B cell (primary cell): ENCODE measurements at regions of chr2 and their contacts with region 1.

Region 1: GRCh38 chr2:28392297-28393113 is at the start of gene FOSL2:
- DNase-seq: peak; percentile 84
- ATAC-seq: peak; percentile 78
- H3K4me3 ChIP-seq: peak within 1 kb of the TSS; percentile 42 to 90 (median 61)
- H3K4me3 Mint-ChIP-seq: peak within 1 kb of the TSS; percentile 89
- H3K27ac ChIP-seq: peak within 1 kb of the TSS; percentile 6 to 52
- H3K27ac Mint-ChIP-seq: peak within 1 kb of the TSS; percentile 87
- H3K4me1 ChIP-seq: peaks cover 18% of the 10 kb centered on the region in 2 donors
- H3K4me1 Mint-ChIP-seq: peaks cover 25% of the 10 kb centered on the region
- H3K27me3 ChIP-seq: peaks cover 0 to 31% (median 4%) of the 10 kb centered on the region in 4 experiments
- H3K27me3 Mint-ChIP-seq: peaks cover 17% of the 10 kb centered on the region
- CTCF ChIP-seq: no peak
- total RNA-seq, gene FOSL2: 37.7 and 42.2 TPM in 2 replicates

Region 2: GRCh38 chr2:27217217-27218121 is 1175.0 kb before region 1 on chr2 and contains the start of gene CAD:
- CTCF ChIA-PET with region 1: no interaction called
- POLR2A ChIA-PET with region 1: no interaction called
- intact Hi-C with region 1: loop called (anchors 5 kb)
- DNase-seq: peak; percentile 89
- ATAC-seq: peak; percentile 86
- H3K4me3 ChIP-seq: peak within 1 kb of the TSS; percentile 11 to 85 (median 79)
- H3K4me3 Mint-ChIP-seq: peak within 1 kb of the TSS; percentile 98
- H3K27ac ChIP-seq: peak within 1 kb of the TSS; percentile 70 to 74
- H3K27ac Mint-ChIP-seq: peak within 1 kb of the TSS; percentile 87
- H3K4me1 ChIP-seq: peaks cover 28 to 33% of the 10 kb centered on the region in 2 donors
- H3K4me1 Mint-ChIP-seq: peaks cover 44% of the 10 kb centered on the region
- H3K27me3 ChIP-seq: no peaks in the 10 kb centered on the region
- H3K27me3 Mint-ChIP-seq: no peaks in the 10 kb centered on the region
- CTCF ChIP-seq: no peak
- total RNA-seq, gene CAD: 35.6 and 36.0 TPM in 2 replicates

Region 3: DNA sequence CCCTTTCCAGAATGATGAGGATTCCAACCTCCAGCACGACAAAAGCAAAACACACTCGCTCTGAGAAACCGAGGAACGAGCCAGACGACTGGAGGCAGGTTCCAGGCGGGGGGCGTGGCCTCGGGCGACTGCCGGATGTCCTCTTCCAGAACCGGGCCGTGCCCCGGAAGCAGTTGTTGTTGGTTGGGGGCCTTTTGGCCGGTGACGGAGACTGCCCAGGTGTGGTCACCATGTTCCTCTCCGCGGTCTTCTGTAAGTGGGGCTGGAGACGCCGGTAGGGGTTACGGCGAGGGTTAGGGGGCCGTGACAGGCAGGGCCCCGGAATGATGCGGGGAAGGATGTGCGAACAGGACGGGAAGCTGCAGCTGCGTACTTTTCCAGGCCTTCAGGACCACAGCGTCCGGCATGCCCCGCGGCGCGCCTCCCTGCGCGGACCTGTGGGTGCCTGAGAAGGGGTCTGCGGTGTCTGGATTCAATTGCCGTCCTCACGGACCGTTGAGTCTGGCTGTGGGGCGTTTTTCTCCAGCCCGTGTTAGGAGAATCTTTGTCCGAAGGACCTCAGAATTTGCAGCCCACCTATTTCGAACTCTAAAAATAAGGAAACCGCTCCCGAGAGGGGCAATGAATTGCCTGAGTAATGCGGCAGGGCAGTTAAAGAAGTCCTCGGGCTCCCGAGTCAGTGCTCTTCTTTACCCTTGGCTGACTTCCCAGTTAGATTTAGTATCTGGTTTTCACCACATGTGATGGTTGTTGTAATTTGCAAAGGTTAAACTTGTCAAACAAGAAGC is 620.8 kb before region 1 on chr2 and contains the start of gene MRPL33:
- CTCF ChIA-PET with region 1: no interaction called
- POLR2A ChIA-PET with region 1: interaction called, 3 read pairs
- intact Hi-C with region 1: loop called (anchors 5 kb)
- DNase-seq: peak; percentile 93
- ATAC-seq: peak; percentile 94
- H3K4me3 ChIP-seq: peak within 1 kb of the TSS; percentile 62 to 91 (median 85)
- H3K4me3 Mint-ChIP-seq: peak within 1 kb of the TSS; percentile 100
- H3K27ac ChIP-seq: peak within 1 kb of the TSS; percentile 75 to 93
- H3K27ac Mint-ChIP-seq: peak within 1 kb of the TSS; percentile 99
- H3K4me1 ChIP-seq: peaks cover 11 to 22% of the 10 kb centered on the region in 2 donors
- H3K4me1 Mint-ChIP-seq: peaks cover 34% of the 10 kb centered on the region
- H3K27me3 ChIP-seq: peaks cover 0 to 16% (median 2%) of the 10 kb centered on the region in 4 experiments
- H3K27me3 Mint-ChIP-seq: peaks cover 13% of the 10 kb centered on the region
- CTCF ChIP-seq: no peak
- total RNA-seq, gene MRPL33: 26.5 and 26.9 TPM in 2 replicates

Region 4: GRCh38 chr2:28359222-28360065 is 33.1 kb before region 1 on chr2:
- CTCF ChIA-PET with region 1: no interaction called
- POLR2A ChIA-PET with region 1: interaction called, 8 read pairs
- intact Hi-C with region 1: loop called (anchors 1 kb)
- DNase-seq: peak; percentile 82
- ATAC-seq: peak; percentile 76
- H3K4me3 ChIP-seq: peak overlapping the region in 4 of 5 experiments; percentile 5 to 38 (median 22)
- H3K4me3 Mint-ChIP-seq: peak overlapping the region; percentile 75
- H3K27ac ChIP-seq: no peak overlapping the region
- H3K27ac Mint-ChIP-seq: peak overlapping the region; percentile 88
- H3K4me1 ChIP-seq: peaks cover 11 to 22% of the 10 kb centered on the region in 2 donors
- H3K4me1 Mint-ChIP-seq: peaks cover 24% of the 10 kb centered on the region
- H3K27me3 ChIP-seq: peaks cover 0 to 7% (median 0%) of the 10 kb centered on the region in 4 experiments
- H3K27me3 Mint-ChIP-seq: peaks cover 3% of the 10 kb centered on the region
- CTCF ChIP-seq: no peak

Region 5: GRCh38 chr2:28894470-28895177 is 502.1 kb after region 1 on chr2 and contains the start of gene WDR43:
- CTCF ChIA-PET with region 1: no interaction called
- POLR2A ChIA-PET with region 1: no interaction called
- intact Hi-C with region 1: loop called (anchors 10 kb)
- DNase-seq: peak; percentile 98
- ATAC-seq: peak; percentile 97
- H3K4me3 ChIP-seq: peak within 1 kb of the TSS; percentile 64 to 89 (median 84)
- H3K4me3 Mint-ChIP-seq: peak within 1 kb of the TSS; percentile 92
- H3K27ac ChIP-seq: peak within 1 kb of the TSS; percentile 71 to 81
- H3K27ac Mint-ChIP-seq: peak within 1 kb of the TSS; percentile 94
- H3K4me1 ChIP-seq: peaks cover 26 to 30% of the 10 kb centered on the region in 2 donors
- H3K4me1 Mint-ChIP-seq: peaks cover 43% of the 10 kb centered on the region
- H3K27me3 ChIP-seq: no peaks in the 10 kb centered on the region
- H3K27me3 Mint-ChIP-seq: no peaks in the 10 kb centered on the region
- CTCF ChIP-seq: no peak
- total RNA-seq, gene WDR43: 48.6 and 51.0 TPM in 2 replicates